IMR-90 (cell line): ENCODE measurements at regions of chr2 and their contacts with region 1.

Region 1: DNA sequence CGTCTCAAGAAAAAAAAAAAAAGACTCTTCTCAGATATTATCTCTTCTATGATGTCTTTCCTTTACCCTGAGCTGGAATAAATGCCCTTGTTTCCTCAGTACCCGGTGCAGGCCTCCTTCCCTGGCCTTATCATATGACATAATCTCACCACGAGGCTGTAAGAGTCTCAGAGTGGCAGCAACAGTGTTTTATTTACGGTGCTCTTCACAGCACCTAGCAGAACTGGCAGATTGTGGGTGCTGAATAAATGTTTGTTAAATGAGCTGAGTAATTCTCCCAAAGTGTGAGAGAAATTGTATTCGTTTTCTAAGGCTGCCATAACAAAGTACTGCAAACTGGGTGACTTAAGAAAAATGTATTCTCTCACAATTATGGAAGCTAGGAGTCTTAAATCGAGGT is 82.8 kb upstream of the CD28 start:
- DNase-seq: peak; percentile 27
- ATAC-seq: no peak
- H3K4me3 ChIP-seq: no peak overlapping the region
- H3K27ac ChIP-seq: peak overlapping the region; percentile 79
- H3K4me1 ChIP-seq: peaks cover 16% of the 10 kb centered on the region
- H3K27me3 ChIP-seq: no peaks in the 10 kb centered on the region
- CTCF ChIP-seq: no peak
- POLR2A ChIP-seq: no peak
- RAD21 ChIP-seq: no peak

Region 2: GRCh38 chr2:203535078-203535783 is 88.4 kb before region 1 on chr2 and contains the start of gene RAPH1:
- CTCF ChIA-PET with region 1: no interaction called
- POLR2A ChIA-PET with region 1: no interaction called
- dilution Hi-C with region 1: no loop called
- in situ Hi-C with region 1: no loop called
- intact Hi-C with region 1: loop called (anchors 1 kb)
- DNase-seq: peak; percentile 82
- ATAC-seq: peak; percentile 92
- H3K4me3 ChIP-seq: peak within 1 kb of the TSS; percentile 58
- H3K27ac ChIP-seq: peak within 1 kb of the TSS; percentile 90
- H3K4me1 ChIP-seq: no peaks in the 10 kb centered on the region; the same call in 1 of the 2 replicates
- H3K27me3 ChIP-seq: no peaks in the 10 kb centered on the region
- CTCF ChIP-seq: no peak
- POLR2A ChIP-seq: peak; percentile 83
- RAD21 ChIP-seq: no peak; the same call in 1 of the 2 replicates
- total RNA-seq, gene RAPH1: 13.1 and 15.1 TPM in 2 replicates

Region 3: DNA sequence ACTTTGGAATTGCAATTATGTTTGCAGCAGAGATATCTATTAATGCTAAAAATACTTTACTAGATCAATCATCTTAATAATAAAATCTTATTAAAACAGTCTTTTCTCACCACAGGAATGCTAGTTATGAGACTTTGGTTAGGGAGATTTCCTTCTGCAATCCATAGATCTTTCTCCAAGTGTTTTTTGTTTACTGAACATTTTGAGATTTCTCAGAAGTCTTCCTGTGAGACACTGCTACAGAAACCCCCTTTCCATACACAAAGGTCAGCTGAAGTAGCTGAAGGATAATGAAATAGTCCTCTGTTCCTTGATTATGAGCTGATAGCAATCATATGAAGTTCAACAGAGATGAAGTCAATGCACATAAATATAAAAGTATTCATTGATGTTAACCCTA is 29.1 kb before region 1 on chr2:
- CTCF ChIA-PET with region 1: interaction called, 11 read pairs
- POLR2A ChIA-PET with region 1: no interaction called
- dilution Hi-C with region 1: no loop called
- in situ Hi-C with region 1: no loop called
- intact Hi-C with region 1: no loop called
- DNase-seq: peak; percentile 68
- ATAC-seq: peak; percentile 87
- H3K4me3 ChIP-seq: no peak overlapping the region
- H3K27ac ChIP-seq: no peak overlapping the region
- H3K4me1 ChIP-seq: peaks cover 9% of the 10 kb centered on the region
- H3K27me3 ChIP-seq: no peaks in the 10 kb centered on the region
- CTCF ChIP-seq: no peak
- POLR2A ChIP-seq: no peak
- RAD21 ChIP-seq: no peak

Region 4: GRCh38 chr2:203808046-203808750 is 184.5 kb after region 1 on chr2:
- CTCF ChIA-PET with region 1: no interaction called
- POLR2A ChIA-PET with region 1: no interaction called
- dilution Hi-C with region 1: no loop called
- in situ Hi-C with region 1: no loop called
- intact Hi-C with region 1: loop called (anchors 2 kb)
- DNase-seq: peak; percentile 95
- ATAC-seq: peak; percentile 70
- H3K4me3 ChIP-seq: no peak overlapping the region
- H3K27ac ChIP-seq: peak overlapping the region; percentile 54; the same call in 1 of the 2 replicates
- H3K4me1 ChIP-seq: peaks cover 21% of the 10 kb centered on the region
- H3K27me3 ChIP-seq: no peaks in the 10 kb centered on the region
- CTCF ChIP-seq: no peak
- POLR2A ChIP-seq: no peak; the same call in 1 of the 2 replicates
- RAD21 ChIP-seq: no peak